ENCODE measurements at regions of chr1 and their contacts with region 1.

Region 1: GRCh38 chr1:230917284-230918135 is 49.2 kb upstream of the C1orf198 start:
- DNase-seq: peak; percentile 57 to 80 (median 63)
- ATAC-seq: peak; percentile 59 to 90 (median 79)
- H3K4me3 ChIP-seq: no peak overlapping the region
- H3K27ac ChIP-seq: no peak overlapping the region
- H3K4me1 ChIP-seq: no peaks in the 10 kb centered on the region
- H3K27me3 ChIP-seq: no peaks in the 10 kb centered on the region
- CTCF ChIP-seq: peak; percentile 43 to 79 (median 62)
- POLR2A ChIP-seq: no peak

Region 2: GRCh38 chr1:230661976-230662375 is 255.5 kb before region 1 on chr1:
- intact Hi-C with region 1: loop called in 1 of 10 experiments (anchors 10 kb)
- DNase-seq: no peak
- ATAC-seq: no peak
- H3K4me3 ChIP-seq: no peak overlapping the region
- H3K27ac ChIP-seq: no peak overlapping the region
- H3K4me1 ChIP-seq: no peaks in the 10 kb centered on the region
- H3K27me3 ChIP-seq: no peaks in the 10 kb centered on the region
- CTCF ChIP-seq: no peak
- POLR2A ChIP-seq: no peak

Region 3: GRCh38 chr1:230797942-230798418 is 119.5 kb before region 1 on chr1:
- intact Hi-C with region 1: loop called (anchors 1 to 2 kb)
- DNase-seq: peak in 4 of 5 donors; percentile 64 to 78 (median 67)
- ATAC-seq: peak; percentile 83 to 95 (median 90)
- H3K4me3 ChIP-seq: peak overlapping the region in 1 of 12 donors; percentile 12
- H3K27ac ChIP-seq: no peak overlapping the region
- H3K4me1 ChIP-seq: no peaks in the 10 kb centered on the region
- H3K27me3 ChIP-seq: no peaks in the 10 kb centered on the region
- CTCF ChIP-seq: peak; percentile 39 to 87 (median 79)
- POLR2A ChIP-seq: no peak

Region 4: GRCh38 chr1:230957580-230957989 is 40.1 kb after region 1 on chr1:
- intact Hi-C with region 1: no loop called
- DNase-seq: no peak
- ATAC-seq: no peak
- H3K4me3 ChIP-seq: no peak overlapping the region
- H3K27ac ChIP-seq: no peak overlapping the region
- H3K4me1 ChIP-seq: no peaks in the 10 kb centered on the region
- H3K27me3 ChIP-seq: no peaks in the 10 kb centered on the region
- CTCF ChIP-seq: no peak
- POLR2A ChIP-seq: no peak

Region 5: DNA sequence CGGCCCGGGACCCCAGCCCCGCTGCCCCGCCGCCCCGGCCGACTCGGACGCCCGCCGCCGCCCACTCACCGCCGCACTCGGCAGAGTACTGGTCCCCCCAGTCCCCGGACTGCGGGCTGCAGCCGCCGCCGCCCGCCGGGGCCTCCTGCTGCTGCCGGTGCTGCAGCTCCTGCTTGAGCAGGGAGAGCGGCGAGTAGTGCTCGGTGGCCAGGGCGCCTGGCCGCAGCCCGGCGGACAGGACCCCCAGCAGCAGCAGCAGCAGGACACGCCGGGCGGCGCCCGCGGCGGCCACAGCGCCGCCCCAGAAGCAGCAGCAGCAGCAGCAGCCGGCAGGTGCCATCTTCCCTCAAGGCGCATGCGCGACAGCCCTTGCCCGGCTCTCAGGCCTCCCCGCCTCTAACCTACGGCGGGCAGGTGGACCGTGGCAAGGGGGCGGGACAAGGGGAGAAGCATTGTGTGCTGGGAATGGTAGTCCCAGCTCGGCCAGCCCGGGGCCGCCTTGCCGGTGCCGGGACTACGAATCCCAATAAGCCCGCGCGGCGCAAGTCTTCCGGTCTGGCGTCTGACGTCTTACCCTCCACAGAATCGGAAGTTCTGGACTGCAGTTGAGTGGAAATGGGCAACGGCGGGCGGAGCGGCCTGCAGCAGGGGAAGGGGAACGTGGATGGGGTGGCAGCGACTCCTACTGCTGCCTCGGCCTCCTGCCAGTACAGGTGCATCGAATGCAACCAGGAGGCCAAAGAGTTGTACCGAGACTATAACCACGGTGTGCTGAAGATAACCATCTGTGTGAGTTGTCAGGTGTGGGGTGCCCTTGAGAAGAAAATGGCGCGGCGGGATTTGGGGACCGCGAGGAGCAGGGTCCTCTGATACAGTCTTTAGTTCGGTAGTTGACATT is 61.2 kb after region 1 on chr1 and contains the starts of genes ARV1 and TTC13:
- intact Hi-C with region 1: loop called in 2 of 10 experiments (anchors 5 to 10 kb)
- DNase-seq: peak; percentile 98 to 100 (median 99)
- ATAC-seq: peak; percentile 100
- H3K4me3 ChIP-seq: peak within 1 kb of the TSS; percentile 40 to 92 (median 80)
- H3K27ac ChIP-seq: peak within 1 kb of the TSS; percentile 75 to 88 (median 80)
- H3K4me1 ChIP-seq: peaks cover 0 to 41% (median 20%) of the 10 kb centered on the region in 12 donors
- H3K27me3 ChIP-seq: no peaks in the 10 kb centered on the region
- CTCF ChIP-seq: peak in 7 of 12 donors; percentile 19 to 48 (median 28)
- POLR2A ChIP-seq: peak in 1 of 2 donors; percentile 79
- total RNA-seq, gene ARV1: 16.3 to 24.8 (median 22.0) TPM
- total RNA-seq, gene TTC13: 5.8 to 9.6 (median 6.9) TPM